Esophagus muscularis mucosa (tissue), 4 donors: ENCODE measurements at regions of chr10 and their contacts with region 1.

Region 1: GRCh38 chr10:95536017-95536416 is 25.2 kb downstream of the SORBS1 start:
- DNase-seq: no peak
- H3K4me3 ChIP-seq: no peak overlapping the region
- H3K27ac ChIP-seq: peak overlapping the region; percentile 91 to 97 (median 96)
- H3K4me1 ChIP-seq: peaks cover 89 to 99% (median 98%) of the 10 kb centered on the region in 4 donors
- H3K27me3 ChIP-seq: no peaks in the 10 kb centered on the region
- CTCF ChIP-seq: no peak
- EP300 ChIP-seq: peak; percentile 98
- POLR2A ChIP-seq: no peak

Region 2: GRCh38 chr10:95176101-95176500 is 359.9 kb before region 1 on chr10:
- intact Hi-C with region 1: no loop called
- DNase-seq: no peak
- H3K4me3 ChIP-seq: no peak overlapping the region
- H3K27ac ChIP-seq: no peak overlapping the region
- H3K4me1 ChIP-seq: no peaks in the 10 kb centered on the region
- H3K27me3 ChIP-seq: no peaks in the 10 kb centered on the region
- CTCF ChIP-seq: no peak
- EP300 ChIP-seq: no peak
- POLR2A ChIP-seq: no peak

Region 3: DNA sequence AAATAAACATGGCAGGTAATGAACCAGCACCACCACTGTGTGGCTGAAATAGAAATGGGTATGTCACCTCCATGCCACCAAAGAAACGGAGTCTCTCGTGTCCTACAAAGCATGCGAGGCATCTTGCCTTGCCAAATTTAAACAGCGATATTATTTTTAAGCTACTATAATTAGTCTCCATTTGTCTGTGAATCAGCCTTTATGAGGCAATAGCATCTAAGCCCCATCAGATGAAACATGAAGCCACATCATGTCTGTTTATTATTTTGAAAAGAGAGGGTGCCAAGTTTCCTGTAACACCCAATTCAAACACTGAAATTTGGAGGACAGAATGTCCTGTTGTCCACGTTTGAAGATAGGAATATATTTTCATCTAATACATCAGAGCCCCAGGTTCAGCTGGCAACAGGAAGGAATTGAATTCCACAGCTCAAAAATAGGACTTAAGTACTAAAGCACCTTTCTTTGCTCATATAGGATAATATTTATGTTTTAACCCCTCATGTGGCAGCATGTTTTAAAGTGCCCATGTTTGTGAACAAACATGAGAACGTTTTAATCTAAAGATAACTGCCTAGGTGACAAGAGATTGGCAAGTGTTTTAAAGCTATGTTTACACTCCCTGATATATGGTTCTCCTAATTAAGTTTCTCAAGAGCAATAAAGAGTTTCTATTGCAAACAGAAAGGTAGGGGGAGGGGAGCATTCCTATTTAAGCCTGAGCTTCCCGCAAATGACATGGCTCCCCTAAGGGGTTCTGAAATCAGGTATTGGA is 61.6 kb before region 1 on chr10:
- intact Hi-C with region 1: loop called (anchors 10 kb)
- DNase-seq: no peak
- H3K4me3 ChIP-seq: no peak overlapping the region
- H3K27ac ChIP-seq: peak overlapping the region; percentile 85 to 97 (median 94)
- H3K4me1 ChIP-seq: peaks cover 96 to 100% (median 100%) of the 10 kb centered on the region in 4 donors
- H3K27me3 ChIP-seq: no peaks in the 10 kb centered on the region
- CTCF ChIP-seq: peak in 2 of 3 experiments; percentile 18 to 28
- EP300 ChIP-seq: peak; percentile 99
- POLR2A ChIP-seq: no peak